Dorsolateral prefrontal cortex (tissue), 120 donors: ENCODE measurements at regions of chr4 and their contacts with region 1.

Region 1: GRCh38 chr4:173257732-173258717 is 76.1 kb downstream of the HMGB2 start:
- DNase-seq: peak; percentile 56 to 86 (median 76)
- H3K4me3 ChIP-seq: no peak overlapping the region
- H3K27ac ChIP-seq: peak overlapping the region in 2 of 59 donors; percentile 29 to 51
- H3K27me3 ChIP-seq: no peaks in the 10 kb centered on the region
- CTCF ChIP-seq: peak; percentile 53 to 95 (median 82)

Region 2: DNA sequence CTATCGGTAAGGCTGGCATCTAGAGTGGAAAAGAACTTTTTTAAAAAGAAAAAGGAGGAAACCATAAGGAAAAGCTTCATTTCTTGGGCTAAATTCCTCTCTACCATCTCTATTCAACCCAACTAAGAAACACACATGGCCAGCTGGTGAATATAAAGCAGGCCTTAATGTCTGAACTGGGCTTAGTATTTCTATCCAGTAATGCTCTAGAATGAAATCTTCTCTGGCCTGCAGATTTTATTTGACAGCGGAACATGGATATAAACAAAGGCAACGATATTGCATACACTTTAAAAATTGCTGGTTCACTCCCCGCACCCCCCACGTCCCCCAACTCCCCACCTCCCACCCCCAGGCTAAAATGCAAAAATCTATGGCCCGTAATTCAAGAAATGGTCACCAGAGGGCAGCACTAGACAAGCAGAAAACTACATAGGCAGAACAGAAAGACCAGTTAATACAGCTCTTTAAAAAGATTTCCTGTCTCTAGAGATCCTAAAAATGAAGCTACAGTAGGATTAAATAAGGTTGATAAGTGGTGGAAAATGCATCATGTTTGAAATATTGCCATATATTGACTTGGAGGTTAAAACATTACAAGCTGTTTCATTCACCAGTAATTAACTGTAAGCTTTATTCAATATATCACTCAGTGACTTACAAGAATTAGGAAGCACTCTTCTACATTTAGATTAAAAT is 244.6 kb before region 1 on chr4:
- intact Hi-C with region 1: loop called in 1 of 2 experiments (anchors 2 kb)
- DNase-seq: peak in 2 of 10 donors; percentile 51 to 59
- H3K4me3 ChIP-seq: no peak overlapping the region
- H3K27ac ChIP-seq: peak overlapping the region in 4 of 59 donors; percentile 22 to 75 (median 26)
- H3K27me3 ChIP-seq: no peaks in the 10 kb centered on the region
- CTCF ChIP-seq: peak; percentile 62 to 88 (median 77)

Region 3: GRCh38 chr4:173019711-173020110 is 238.3 kb before region 1 on chr4:
- intact Hi-C with region 1: loop called (anchors 2 to 5 kb)
- DNase-seq: no peak
- H3K4me3 ChIP-seq: no peak overlapping the region
- H3K27ac ChIP-seq: peak overlapping the region in 1 of 59 donors; percentile 9
- H3K27me3 ChIP-seq: no peaks in the 10 kb centered on the region
- CTCF ChIP-seq: no peak

Region 4: GRCh38 chr4:173025131-173025530 is 232.9 kb before region 1 on chr4:
- intact Hi-C with region 1: loop called (anchors 2 to 5 kb)
- DNase-seq: peak in 4 of 10 donors; percentile 25 to 70 (median 42)
- H3K4me3 ChIP-seq: no peak overlapping the region
- H3K27ac ChIP-seq: no peak overlapping the region
- H3K27me3 ChIP-seq: no peaks in the 10 kb centered on the region
- CTCF ChIP-seq: peak; percentile 55 to 88 (median 78)